MCF 10A (cell line): ENCODE measurements at regions of chr1 and their contacts with region 1.

Region 1: DNA sequence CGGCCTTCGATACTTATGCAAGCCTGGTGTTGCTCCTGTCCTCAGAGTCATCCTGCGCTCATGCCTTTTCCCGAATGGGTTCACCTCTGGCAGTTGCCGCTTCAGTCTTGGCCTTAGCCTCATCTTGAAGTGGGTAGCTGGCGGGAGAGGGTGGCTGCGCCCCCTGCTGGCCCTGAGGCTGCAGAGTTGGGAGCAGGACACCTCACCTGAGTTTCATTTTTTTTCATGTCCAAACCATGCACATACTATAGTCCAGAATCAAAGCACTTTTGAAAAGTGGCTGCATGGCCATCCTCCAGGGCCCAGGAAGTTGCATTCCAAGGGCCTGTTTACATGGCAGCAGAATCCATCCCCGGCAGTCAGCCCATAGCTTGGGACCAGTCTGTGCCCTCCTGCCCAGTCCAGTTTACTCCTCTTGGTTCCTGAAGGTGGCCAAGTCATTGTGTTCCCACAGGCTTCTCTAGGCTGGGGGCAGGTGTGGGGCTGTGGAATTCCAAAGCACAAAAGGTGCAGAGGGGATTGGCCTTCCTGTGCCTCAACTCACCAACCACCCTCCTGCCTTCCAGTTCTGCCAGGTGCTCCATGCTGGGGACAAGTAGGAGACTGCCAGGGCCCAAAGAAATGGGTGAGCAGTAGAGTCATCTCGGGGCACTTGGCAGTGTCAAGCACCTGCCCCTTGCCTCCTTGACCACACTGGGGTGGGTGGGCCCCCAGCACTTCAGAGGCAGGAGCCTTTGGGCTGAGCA is 44.0 kb downstream of the YARS1 start:
- DNase-seq: peak; percentile 86
- H3K4me3 Mint-ChIP-seq: no peak overlapping the region
- H3K27ac Mint-ChIP-seq: peak overlapping the region; percentile 64
- H3K4me1 Mint-ChIP-seq: peaks cover 28% of the 10 kb centered on the region
- H3K27me3 Mint-ChIP-seq: no peaks in the 10 kb centered on the region
- CTCF ChIP-seq: peak; percentile 95

Region 2: GRCh38 chr1:32709075-32709474 is 64.1 kb before region 1 on chr1:
- CTCF ChIA-PET with region 1: interaction called, 418 read pairs
- POLR2A ChIA-PET with region 1: interaction called, 61 read pairs
- intact Hi-C with region 1: loop called (anchors 1 kb)
- DNase-seq: no peak
- H3K4me3 Mint-ChIP-seq: no peak overlapping the region
- H3K27ac Mint-ChIP-seq: no peak overlapping the region
- H3K4me1 Mint-ChIP-seq: no peaks in the 10 kb centered on the region
- H3K27me3 Mint-ChIP-seq: no peaks in the 10 kb centered on the region
- CTCF ChIP-seq: no peak

Region 3: DNA sequence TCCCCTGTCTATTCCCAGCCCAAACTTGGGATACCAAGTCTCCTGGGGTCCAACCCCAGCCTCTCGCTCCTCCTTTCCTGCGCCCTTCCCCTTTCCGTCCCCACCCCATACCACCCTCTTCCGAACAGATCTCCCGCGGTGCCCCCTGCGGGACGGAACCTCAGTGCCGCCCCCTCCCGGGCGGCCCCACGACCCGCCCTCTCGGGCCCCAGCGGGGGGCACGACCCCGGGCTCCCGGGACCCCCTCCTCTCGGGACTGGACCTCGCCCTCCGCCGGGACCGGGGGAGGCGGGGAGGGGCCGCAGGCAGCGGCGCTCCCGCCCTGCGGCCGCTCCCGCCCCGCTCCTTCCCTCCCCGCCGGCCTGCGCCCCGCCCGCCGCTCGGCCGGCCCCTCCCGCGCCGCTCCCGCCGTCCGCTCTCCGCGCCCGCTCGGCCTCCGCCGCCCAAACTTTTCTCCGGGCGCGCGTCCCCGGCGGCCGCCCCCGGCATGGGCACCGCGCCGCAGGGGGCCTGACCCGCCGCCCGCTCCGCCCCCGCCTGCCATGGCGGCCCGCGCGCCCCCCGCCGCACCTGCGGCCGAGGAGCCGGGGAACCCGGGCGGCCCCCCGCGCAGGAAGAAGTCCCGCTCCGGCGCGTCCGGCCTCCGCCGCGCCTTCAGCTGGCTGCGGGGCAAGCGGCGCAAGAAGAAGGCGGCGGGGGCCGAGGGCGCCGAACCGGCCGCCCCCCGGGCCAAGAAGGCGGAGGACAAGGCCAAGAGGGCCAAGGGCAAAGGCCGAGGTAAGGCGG is 31.6 kb before region 1 on chr1:
- CTCF ChIA-PET with region 1: interaction called, 11 read pairs
- POLR2A ChIA-PET with region 1: interaction called, 10 read pairs
- intact Hi-C with region 1: loop called (anchors 1 kb)
- DNase-seq: no peak
- H3K4me3 Mint-ChIP-seq: peak overlapping the region; percentile 75
- H3K27ac Mint-ChIP-seq: peak overlapping the region; percentile 63
- H3K4me1 Mint-ChIP-seq: peaks cover 27% of the 10 kb centered on the region
- H3K27me3 Mint-ChIP-seq: no peaks in the 10 kb centered on the region
- CTCF ChIP-seq: peak; percentile 59

Region 4: GRCh38 chr1:32761253-32761880 is 11.8 kb before region 1 on chr1:
- CTCF ChIA-PET with region 1: interaction called, 51 read pairs
- POLR2A ChIA-PET with region 1: interaction called, 36 read pairs
- intact Hi-C with region 1: no loop called
- DNase-seq: peak; percentile 96
- H3K4me3 Mint-ChIP-seq: peak overlapping the region; percentile 72
- H3K27ac Mint-ChIP-seq: peak overlapping the region; percentile 97
- H3K4me1 Mint-ChIP-seq: peaks cover 51% of the 10 kb centered on the region
- H3K27me3 Mint-ChIP-seq: no peaks in the 10 kb centered on the region
- CTCF ChIP-seq: no peak

Region 5: DNA sequence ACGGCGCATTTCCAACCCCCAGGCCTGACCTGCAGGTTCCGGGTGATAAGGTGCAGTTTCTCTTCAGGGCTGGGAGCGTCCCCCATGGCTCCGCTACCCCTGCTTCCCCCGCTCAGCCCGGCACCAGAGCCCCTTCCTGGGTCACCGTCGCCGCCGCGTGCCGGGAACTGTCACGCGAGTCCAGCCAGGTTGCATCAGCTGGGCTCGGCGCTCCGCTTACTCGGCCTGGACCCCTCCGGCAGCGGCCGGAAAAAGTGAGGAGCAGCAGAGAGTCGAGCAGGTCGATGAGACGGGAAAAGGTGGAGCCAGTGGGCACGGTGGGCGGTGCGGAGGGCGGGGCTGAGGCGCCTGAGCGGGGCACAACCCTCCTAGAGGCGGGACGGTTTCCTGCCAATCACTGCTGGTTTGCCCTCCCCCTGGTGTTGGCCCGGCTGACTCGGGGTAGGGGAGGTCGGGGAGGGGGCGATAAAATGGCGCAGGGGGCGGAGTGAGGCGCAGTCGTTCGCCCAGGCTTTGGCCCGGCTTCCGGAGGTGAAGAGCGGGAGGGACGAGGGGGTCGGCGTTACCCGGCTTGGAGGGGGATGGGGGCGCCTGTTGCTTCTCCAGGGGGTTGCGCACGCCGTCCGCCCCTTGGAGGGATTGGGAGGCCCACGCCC is 44.1 kb after region 1 on chr1 and contains the starts of genes S100PBP and YARS1:
- CTCF ChIA-PET with region 1: interaction called, 3 read pairs
- POLR2A ChIA-PET with region 1: interaction called, 17 read pairs
- intact Hi-C with region 1: no loop called
- DNase-seq: peak; percentile 98
- H3K4me3 Mint-ChIP-seq: peak within 1 kb of the TSS; percentile 87
- H3K27ac Mint-ChIP-seq: peak within 1 kb of the TSS; percentile 87
- H3K4me1 Mint-ChIP-seq: peaks cover 27% of the 10 kb centered on the region
- H3K27me3 Mint-ChIP-seq: no peaks in the 10 kb centered on the region
- CTCF ChIP-seq: no peak
- total RNA-seq, gene S100PBP: 24.4 and 34.1 TPM in 2 replicates
- total RNA-seq, gene YARS1: 347 and 372 TPM in 2 replicates

Region 6: DNA sequence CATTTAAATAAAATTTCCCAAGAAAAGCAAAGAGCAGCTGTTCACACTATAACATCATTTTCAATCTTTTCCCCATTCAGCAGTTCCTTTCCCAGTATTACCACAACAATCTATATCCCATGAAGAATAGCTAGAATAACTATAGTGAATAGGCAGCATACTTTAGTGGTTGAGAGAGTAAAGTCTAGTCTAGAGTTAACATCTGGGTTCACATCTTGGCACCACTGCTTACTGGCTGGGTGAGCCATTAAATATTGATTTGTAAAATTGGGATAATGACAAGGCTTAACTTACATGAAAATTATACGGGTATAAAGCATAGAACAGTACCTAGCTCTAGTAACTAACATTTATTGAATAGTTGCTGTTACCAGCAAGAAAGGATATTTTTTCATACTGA is 58.7 kb after region 1 on chr1:
- CTCF ChIA-PET with region 1: no interaction called
- POLR2A ChIA-PET with region 1: no interaction called
- intact Hi-C with region 1: no loop called
- DNase-seq: no peak
- H3K4me3 Mint-ChIP-seq: no peak overlapping the region
- H3K27ac Mint-ChIP-seq: no peak overlapping the region
- H3K4me1 Mint-ChIP-seq: peaks cover 6% of the 10 kb centered on the region
- H3K27me3 Mint-ChIP-seq: no peaks in the 10 kb centered on the region
- CTCF ChIP-seq: no peak